ENCODE measurements at regions of chr1 and their contacts with region 1.

Region 1: GRCh38 chr1:20114021-20114648 is 5.2 kb downstream of the PLA2G2D start:
- DNase-seq: peak; percentile 41

Region 2: DNA sequence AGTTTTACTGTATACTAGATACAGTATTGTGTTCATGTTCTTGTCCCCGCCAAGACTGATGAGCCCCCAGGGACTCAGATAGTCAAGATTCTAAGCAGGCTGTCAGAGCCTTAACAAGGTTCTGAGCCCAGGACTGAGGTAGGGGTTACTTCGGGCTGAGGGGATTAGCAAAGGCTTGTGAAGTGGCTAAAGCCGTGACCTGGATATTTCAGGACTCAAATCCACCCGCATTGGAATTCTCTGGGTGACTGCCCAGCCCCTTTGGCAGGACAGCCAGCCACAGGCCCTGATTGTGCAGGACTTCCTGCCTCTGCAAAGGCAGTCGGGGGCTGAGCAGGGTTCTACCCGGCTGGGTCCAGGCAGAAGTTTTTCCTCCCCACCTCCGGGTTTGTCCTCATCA is 44.3 kb before region 1 on chr1 and contains the start of gene PLA2G5:
- intact Hi-C with region 1: no loop called
- DNase-seq: peak; percentile 90
- total RNA-seq, gene PLA2G5: 6.7 to 9.8 TPM

Region 3: GRCh38 chr1:20141466-20141865 is 27.3 kb after region 1 on chr1:
- intact Hi-C with region 1: loop called in 1 of 2 experiments (anchors 1 kb)
- DNase-seq: peak; percentile 62

Region 4: GRCh38 chr1:21090463-21090862 is 976.3 kb after region 1 on chr1:
- intact Hi-C with region 1: no loop called
- DNase-seq: no peak

Measured in posterior vena cava (tissue), 2 donors.